Activated naive CD4-positive, alpha-beta T cell treated with anti-CD3 and anti-CD28 coated beads for 36 hours (primary cell): ENCODE measurements at regions of chr15 and their contacts with region 1.

Region 1: GRCh38 chr15:44053458-44053857 is 141.6 kb downstream of the FRMD5 start:
- DNase-seq: no peak
- H3K4me3 Mint-ChIP-seq: no peak overlapping the region
- H3K27ac Mint-ChIP-seq: no peak overlapping the region
- H3K4me1 Mint-ChIP-seq: no peaks in the 10 kb centered on the region
- H3K27me3 Mint-ChIP-seq: peaks cover 7% of the 10 kb centered on the region

Region 2: GRCh38 chr15:44015545-44016305 is 37.7 kb before region 1 on chr15:
- CTCF ChIA-PET with region 1: interaction called, 3 read pairs
- intact Hi-C with region 1: loop called (anchors 5 kb)
- DNase-seq: no peak
- H3K4me3 Mint-ChIP-seq: no peak overlapping the region
- H3K27ac Mint-ChIP-seq: no peak overlapping the region
- H3K4me1 Mint-ChIP-seq: no peaks in the 10 kb centered on the region
- H3K27me3 Mint-ChIP-seq: peaks cover 12% of the 10 kb centered on the region